ENCODE measurements at regions of chr4 and their contacts with region 1.

Region 1: DNA sequence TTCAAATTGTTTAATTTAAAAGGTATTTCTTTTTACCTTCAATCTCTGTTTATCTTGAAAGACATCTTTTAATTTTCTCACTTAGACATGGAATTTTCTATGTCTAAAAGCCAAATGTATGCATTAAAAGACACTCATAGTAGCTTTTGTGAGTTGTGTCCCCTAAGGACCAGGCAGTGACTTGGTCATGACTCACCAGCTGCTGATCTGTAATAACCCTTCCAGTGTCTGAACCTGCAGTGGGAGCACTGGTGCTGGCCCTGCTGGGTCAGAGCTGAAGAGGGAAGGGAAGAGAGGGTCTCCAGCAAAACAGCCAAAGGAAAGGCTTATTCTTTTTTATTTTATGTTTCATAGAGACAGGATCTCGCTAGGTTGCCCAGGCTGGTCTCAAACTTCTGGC is 31.1 kb upstream of the SH3D19 start:
- DNase-seq: no peak
- ATAC-seq: no peak
- H3K4me3 ChIP-seq: no peak overlapping the region
- H3K27ac ChIP-seq: no peak overlapping the region
- H3K4me1 ChIP-seq: no peaks in the 10 kb centered on the region
- H3K27me3 ChIP-seq: no peaks in the 10 kb centered on the region

Region 2: DNA sequence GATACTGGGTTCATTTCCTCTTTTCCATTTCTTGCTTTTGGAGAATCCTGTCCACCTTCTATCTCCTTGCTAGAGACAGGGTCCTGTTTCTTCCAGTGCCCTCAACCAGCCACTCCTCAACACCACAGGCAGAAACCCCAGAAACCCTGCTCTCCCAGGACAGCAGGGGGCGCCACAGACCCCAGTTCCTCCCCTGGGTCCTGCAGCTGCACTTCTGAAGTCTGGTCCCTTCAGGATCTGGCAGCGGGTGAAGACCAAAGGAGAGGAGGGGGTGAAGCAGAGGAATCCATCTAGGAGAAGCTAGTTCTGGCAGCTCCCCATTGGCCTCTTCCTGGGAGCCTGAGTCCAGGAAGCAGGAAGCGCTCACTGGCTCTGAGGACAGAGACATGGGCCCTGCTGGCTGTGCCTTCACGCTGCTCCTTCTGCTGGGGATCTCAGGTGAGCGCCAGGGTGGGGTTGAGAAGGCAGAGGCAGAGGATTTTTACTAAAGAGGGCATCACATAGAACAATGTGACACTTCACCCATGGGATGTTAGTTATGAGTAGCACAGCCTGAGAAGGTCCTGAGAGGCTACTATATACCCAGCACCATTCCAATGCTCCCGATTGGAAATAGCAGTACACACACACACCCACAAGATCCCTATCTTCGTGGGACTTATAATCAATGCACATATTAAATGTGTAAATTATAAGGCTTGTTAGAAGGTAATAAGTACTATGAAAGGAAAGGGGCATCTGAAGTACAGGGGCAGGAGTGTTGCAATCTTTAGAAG is 79.5 kb before region 1 on chr4 and contains the start of gene PRSS48:
- intact Hi-C with region 1: loop called in 2 of 4 experiments (anchors 5 to 10 kb)
- DNase-seq: peak; percentile 53 to 83 (median 79)
- ATAC-seq: peak; percentile 69 to 81
- H3K4me3 ChIP-seq: no peak within 1 kb of the TSS
- H3K27ac ChIP-seq: no peak within 1 kb of the TSS
- H3K4me1 ChIP-seq: peaks cover 16% of the 10 kb centered on the region
- H3K27me3 ChIP-seq: no peaks in the 10 kb centered on the region
- total RNA-seq, gene PRSS48: not detected

Region 3: GRCh38 chr4:151455212-151455611 is 98.7 kb after region 1 on chr4:
- intact Hi-C with region 1: no loop called
- DNase-seq: no peak
- ATAC-seq: no peak
- H3K4me3 ChIP-seq: no peak overlapping the region
- H3K27ac ChIP-seq: no peak overlapping the region
- H3K4me1 ChIP-seq: peaks cover 6% of the 10 kb centered on the region
- H3K27me3 ChIP-seq: no peaks in the 10 kb centered on the region